HEK293 (cell line): ENCODE measurements at regions of chrX and their contacts with region 1.

Region 1: DNA sequence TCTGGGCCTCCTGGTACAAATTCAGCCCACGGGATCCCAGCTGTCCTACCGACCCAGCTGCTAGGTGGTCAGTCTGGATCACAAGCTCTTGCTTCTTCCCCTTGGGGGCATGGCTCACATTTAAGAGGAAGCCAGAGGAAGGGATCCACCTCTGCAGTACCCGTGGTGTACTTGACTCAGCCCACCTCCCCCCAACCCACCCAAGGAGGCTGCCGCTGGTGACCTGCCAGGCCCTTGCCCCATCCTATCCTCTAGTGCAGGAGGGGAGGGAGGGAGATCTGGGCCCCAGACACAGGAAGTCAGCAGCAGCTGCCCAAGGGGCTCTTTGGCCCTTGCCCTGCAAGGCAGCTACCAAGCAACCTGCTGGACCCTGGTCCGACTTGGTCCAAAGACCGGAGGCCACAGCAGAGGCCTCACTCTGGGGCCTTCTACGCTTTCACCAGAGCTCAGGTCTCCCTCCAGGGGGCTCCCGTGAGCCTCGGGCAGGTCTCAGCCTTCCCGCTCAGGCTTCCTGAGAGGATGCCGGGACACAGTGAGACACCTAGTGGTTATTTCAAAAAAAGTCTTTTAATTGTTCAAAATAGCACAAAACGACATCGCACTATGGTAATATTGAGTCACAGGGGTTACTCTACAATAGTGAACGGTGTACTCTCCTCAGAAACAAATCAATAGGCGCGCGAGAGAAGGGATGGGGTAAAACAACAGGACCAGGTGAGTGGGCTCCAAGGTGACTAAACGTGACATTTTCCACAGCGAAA is 2.7 kb upstream of the RENBP start:
- H3K4me3 ChIP-seq: no peak overlapping the region
- H3K27ac ChIP-seq: no peak overlapping the region
- H3K4me1 ChIP-seq: no peaks in the 10 kb centered on the region; the same call in 1 of the 2 replicates
- CTCF ChIP-seq: peak; percentile 96

Region 2: GRCh38 chrX:153763989-153764755 is 183.0 kb before region 1 on chrX and contains the start of gene PLXNB3:
- CTCF ChIA-PET with region 1: interaction called, 63 read pairs
- POLR2A ChIA-PET with region 1: interaction called, 3 read pairs
- H3K4me3 ChIP-seq: no peak within 1 kb of the TSS
- H3K27ac ChIP-seq: no peak within 1 kb of the TSS
- H3K4me1 ChIP-seq: 0 out of 2 replicates have a peak, but pooled peaks cover 3% of the 10 kb centered on the region
- CTCF ChIP-seq: peak; percentile 87

Region 3: GRCh38 chrX:153927922-153928760 is 19.0 kb before region 1 on chrX:
- CTCF ChIA-PET with region 1: interaction called, 267 read pairs
- POLR2A ChIA-PET with region 1: interaction called, 38 read pairs
- H3K4me3 ChIP-seq: peak overlapping the region; percentile 66
- H3K27ac ChIP-seq: peak overlapping the region; percentile 95
- H3K4me1 ChIP-seq: peaks cover 10% of the 10 kb centered on the region
- CTCF ChIP-seq: peak; percentile 83

Region 4: GRCh38 chrX:153934473-153935325 is 12.5 kb before region 1 on chrX and contains the start of gene NAA10:
- CTCF ChIA-PET with region 1: interaction called, 267 read pairs
- POLR2A ChIA-PET with region 1: interaction called, 21 read pairs
- H3K4me3 ChIP-seq: peak within 1 kb of the TSS; percentile 88
- H3K27ac ChIP-seq: peak within 1 kb of the TSS; percentile 85
- H3K4me1 ChIP-seq: peaks cover 8% of the 10 kb centered on the region; the same call in 1 of the 2 replicates
- CTCF ChIP-seq: no peak

Region 5: GRCh38 chrX:153960786-153961185 is 13.6 kb after region 1 on chrX:
- CTCF ChIA-PET with region 1: interaction called, 65 read pairs
- POLR2A ChIA-PET with region 1: interaction called, 3 read pairs
- H3K4me3 ChIP-seq: no peak overlapping the region
- H3K27ac ChIP-seq: no peak overlapping the region
- H3K4me1 ChIP-seq: no peaks in the 10 kb centered on the region
- CTCF ChIP-seq: no peak

Region 6: DNA sequence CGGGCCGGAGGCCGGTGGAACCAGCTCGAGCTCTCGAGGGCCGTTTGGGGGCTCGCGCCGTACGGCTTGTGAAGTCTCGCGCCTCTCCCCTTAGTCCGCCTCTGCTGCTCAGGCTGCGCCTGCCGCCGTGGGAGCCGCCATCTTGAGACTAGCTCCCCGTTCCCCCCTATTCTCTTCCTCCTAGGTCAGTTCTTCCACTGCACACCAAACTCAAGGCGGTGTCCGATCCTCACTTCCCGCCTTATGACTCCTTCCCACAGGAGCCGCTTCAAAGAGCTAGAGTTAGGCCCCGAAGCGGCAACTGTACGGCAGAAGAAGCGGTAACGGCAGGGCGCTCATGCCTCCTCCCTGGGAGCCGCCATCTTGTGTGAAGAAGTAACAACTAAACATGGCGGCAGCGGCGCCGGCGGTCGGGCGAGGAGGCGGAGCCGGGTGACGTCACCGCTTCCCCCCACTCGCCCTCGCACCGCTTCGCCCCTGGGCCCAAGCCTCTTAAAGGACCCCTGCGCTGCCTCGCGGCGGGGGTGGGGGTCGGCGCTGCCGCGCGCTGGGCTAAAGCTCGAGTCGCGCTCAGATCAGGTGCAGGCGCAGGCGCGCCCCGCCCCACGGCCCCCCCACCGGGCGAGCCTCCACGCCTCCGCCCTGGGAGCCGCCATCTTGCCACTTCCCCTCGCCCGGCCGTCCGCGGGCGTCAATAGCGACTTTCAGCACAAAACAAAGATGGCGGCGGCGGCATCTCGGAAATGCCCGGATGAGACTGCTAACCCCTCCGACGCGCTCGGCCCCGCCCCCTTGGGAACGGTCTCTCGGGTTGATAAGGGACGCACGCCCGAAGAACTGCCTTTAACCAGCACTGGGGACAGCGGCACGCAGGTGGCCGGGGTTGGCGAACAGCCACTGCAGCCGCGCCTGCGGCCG is 24.5 kb after region 1 on chrX and contains the start of gene HCFC1:
- CTCF ChIA-PET with region 1: interaction called, 65 read pairs
- POLR2A ChIA-PET with region 1: interaction called, 24 read pairs
- H3K4me3 ChIP-seq: peak within 1 kb of the TSS; percentile 95
- H3K27ac ChIP-seq: peak within 1 kb of the TSS; percentile 99
- H3K4me1 ChIP-seq: peaks cover 10% of the 10 kb centered on the region
- CTCF ChIP-seq: no peak; the same call in 1 of the 2 replicates